HCT116 (cell line): ENCODE measurements at regions of chr9 and their contacts with region 1.

Region 1: DNA sequence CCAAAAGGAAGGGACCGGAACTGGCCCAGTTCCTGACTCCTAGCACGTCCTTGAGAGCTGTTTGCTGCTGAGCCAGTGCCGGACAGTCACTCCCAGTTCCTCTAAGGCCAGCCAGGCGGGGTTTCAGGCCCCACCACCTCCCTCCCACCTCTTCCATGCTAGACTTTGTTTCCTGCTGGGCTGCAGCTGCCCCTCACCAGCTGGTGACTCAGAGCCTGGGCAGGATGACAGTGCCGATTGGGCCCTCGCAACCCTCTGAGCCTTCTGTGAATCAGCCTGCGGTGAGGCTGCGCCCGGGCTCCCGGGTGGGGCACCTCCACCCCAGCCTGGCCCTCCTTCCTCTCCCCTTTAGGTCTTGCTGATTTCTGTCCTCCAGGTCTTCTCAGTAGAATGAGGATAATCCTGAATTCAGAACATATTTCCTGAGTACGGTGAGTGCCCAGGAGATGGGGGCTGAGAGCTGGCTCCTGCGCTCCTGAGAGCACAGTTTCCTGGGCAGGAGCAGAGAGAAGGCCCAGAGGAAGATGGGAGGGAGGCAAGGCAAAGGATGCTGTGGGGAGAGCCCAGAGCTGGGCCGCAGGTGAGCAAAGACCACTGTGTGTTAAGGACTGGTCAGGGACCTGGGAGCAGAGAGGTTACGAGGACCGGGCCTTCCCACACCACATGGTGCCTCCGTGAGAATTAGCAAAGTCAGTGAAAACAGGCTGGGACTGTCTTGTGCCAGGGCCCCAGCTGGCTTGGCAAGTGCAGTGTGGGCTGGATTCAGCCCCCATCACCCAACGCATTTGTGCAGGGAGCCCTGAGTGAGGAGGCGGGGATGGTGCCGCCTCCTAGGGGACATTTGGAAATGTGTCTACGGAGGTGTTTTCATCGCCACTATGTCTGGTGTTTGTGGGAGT is 32.9 kb upstream of the STXBP1 start:
- DNase-seq: peak; percentile 91
- ATAC-seq: peak; percentile 89
- H3K4me3 ChIP-seq: peak overlapping the region; percentile 34 to 54
- H3K27ac ChIP-seq: peak overlapping the region; percentile 82
- H3K4me1 ChIP-seq: peaks cover 45 to 69% of the 10 kb centered on the region in 2 experiments
- H3K27me3 ChIP-seq: no peaks in the 10 kb centered on the region
- CTCF ChIP-seq: peak in 2 of 3 experiments; percentile 36 to 50; a peak in 4 of 6 replicates
- POLR2A ChIP-seq: peak; percentile 58
- RAD21 ChIP-seq: no peak

Region 2: GRCh38 chr9:127503947-127504782 is 75.0 kb before region 1 on chr9:
- CTCF ChIA-PET with region 1: interaction called, 11 read pairs
- POLR2A ChIA-PET with region 1: interaction called, 3 read pairs
- RAD21 ChIA-PET with region 1: interaction called, 3 read pairs
- intact Hi-C with region 1: no loop called
- DNase-seq: peak; percentile 62
- ATAC-seq: peak; percentile 83
- H3K4me3 ChIP-seq: no peak overlapping the region
- H3K27ac ChIP-seq: peak overlapping the region; percentile 45
- H3K4me1 ChIP-seq: 0 out of 4 replicates have a peak, but pooled peaks cover 0 to 4% of the 10 kb centered on the region in 2 experiments
- H3K27me3 ChIP-seq: no peaks in the 10 kb centered on the region
- CTCF ChIP-seq: peak; percentile 89 to 93 (median 90)
- POLR2A ChIP-seq: no peak
- RAD21 ChIP-seq: peak; percentile 98

Region 3: DNA sequence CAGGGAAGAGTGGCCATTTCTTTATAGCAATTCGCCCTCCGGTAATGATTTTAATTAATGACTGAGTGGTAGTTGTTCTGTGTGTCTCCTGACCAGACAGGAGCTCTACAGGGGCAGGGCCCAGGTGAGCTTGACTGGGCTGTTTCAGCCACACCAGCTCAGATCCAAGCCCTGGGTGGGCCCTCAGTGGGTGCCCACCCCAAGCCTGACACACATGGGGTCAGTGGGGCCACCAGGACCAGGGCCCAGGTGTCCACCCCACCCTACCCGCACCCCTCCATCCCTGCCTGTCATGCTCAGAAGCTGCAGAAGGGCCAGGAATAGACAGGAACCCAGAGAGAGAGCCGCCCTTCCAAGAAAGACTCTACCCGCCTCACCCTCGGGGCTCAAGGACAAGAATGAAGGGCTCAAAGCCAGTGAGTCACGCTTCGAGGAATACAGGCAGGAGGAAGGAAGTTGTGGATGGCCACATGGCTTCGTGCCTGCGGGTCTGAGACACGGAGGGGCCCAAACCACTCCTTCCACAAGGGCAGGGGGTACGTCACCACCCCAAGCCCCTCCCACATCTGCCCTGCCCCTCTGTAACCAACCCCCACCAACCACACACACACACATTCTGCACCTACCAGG is 23.3 kb before region 1 on chr9:
- CTCF ChIA-PET with region 1: interaction called, 6 read pairs
- POLR2A ChIA-PET with region 1: interaction called, 14 read pairs
- RAD21 ChIA-PET with region 1: interaction called in 1 of 2 experiments, 3 read pairs
- intact Hi-C with region 1: no loop called
- DNase-seq: peak; percentile 80
- ATAC-seq: peak; percentile 88
- H3K4me3 ChIP-seq: no peak overlapping the region
- H3K27ac ChIP-seq: peak overlapping the region; percentile 79
- H3K4me1 ChIP-seq: peaks cover 60 to 71% of the 10 kb centered on the region in 2 experiments
- H3K27me3 ChIP-seq: no peaks in the 10 kb centered on the region
- CTCF ChIP-seq: no peak
- POLR2A ChIP-seq: no peak
- RAD21 ChIP-seq: no peak

Region 4: DNA sequence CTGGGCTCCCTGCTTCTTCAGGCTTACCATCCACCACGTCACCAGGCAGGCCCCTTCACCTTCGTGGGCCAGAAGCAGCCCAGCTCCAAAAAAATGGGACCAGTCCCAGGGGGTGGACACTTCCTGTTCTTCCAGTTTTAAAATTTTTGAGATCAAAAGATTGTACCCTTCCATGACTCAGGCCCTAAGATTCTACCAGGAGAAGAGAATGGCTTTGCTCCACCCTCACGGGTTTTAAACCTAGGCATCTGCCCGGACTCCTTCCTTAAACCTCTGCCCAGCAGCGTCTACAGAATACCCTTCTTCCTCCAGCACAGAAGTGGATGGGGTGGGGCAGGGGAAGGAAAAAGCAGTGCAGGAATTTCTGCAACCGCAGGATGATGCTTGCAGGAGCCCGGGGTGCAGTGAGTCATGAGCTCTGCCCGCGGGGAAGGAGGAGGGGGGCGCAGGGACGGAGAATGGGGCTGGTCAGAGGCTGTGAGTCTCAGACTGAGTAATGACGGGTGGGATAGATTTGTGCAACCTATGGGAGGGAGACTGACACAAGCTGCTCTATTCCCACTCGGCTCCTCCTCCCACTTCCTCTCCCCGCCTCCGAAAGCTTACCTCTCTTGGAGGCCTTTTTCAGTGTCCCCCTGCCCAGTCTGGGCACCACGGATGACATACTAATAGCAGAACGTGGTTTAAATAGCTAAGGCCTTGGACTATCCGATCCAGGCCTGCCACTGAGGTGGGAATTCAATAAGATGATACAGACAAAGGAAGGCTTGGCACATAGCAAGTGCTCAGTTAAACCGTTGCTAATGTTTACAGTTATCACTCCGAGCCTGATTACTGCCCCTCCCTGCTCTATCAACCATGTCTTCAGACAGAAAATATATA is 17.3 kb before region 1 on chr9:
- CTCF ChIA-PET with region 1: interaction called, 6 read pairs
- POLR2A ChIA-PET with region 1: interaction called, 14 read pairs
- RAD21 ChIA-PET with region 1: interaction called in 1 of 2 experiments, 6 read pairs
- intact Hi-C with region 1: no loop called
- DNase-seq: peak; percentile 97
- ATAC-seq: peak; percentile 82
- H3K4me3 ChIP-seq: peak overlapping the region; percentile 27 to 41
- H3K27ac ChIP-seq: peak overlapping the region; percentile 97
- H3K4me1 ChIP-seq: peaks cover 95 to 100% of the 10 kb centered on the region in 2 experiments
- H3K27me3 ChIP-seq: no peaks in the 10 kb centered on the region
- CTCF ChIP-seq: no peak
- POLR2A ChIP-seq: no peak
- RAD21 ChIP-seq: no peak

Region 5: GRCh38 chr9:127567055-127567729 is 12.0 kb before region 1 on chr9:
- CTCF ChIA-PET with region 1: interaction called, 5 read pairs
- POLR2A ChIA-PET with region 1: interaction called, 13 read pairs
- RAD21 ChIA-PET with region 1: interaction called in 1 of 2 experiments, 6 read pairs
- intact Hi-C with region 1: no loop called
- DNase-seq: no peak
- ATAC-seq: peak; percentile 60
- H3K4me3 ChIP-seq: peak overlapping the region; percentile 87 to 96
- H3K27ac ChIP-seq: peak overlapping the region; percentile 97
- H3K4me1 ChIP-seq: peaks cover 67 to 82% of the 10 kb centered on the region in 2 experiments
- H3K27me3 ChIP-seq: no peaks in the 10 kb centered on the region
- CTCF ChIP-seq: no peak
- POLR2A ChIP-seq: no peak
- RAD21 ChIP-seq: no peak

Region 6: GRCh38 chr9:127980706-127981558 is 401.7 kb after region 1 on chr9 and contains the start of gene EEIG1:
- CTCF ChIA-PET with region 1: no interaction called
- POLR2A ChIA-PET with region 1: no interaction called
- RAD21 ChIA-PET with region 1: no interaction called
- intact Hi-C with region 1: no loop called
- DNase-seq: peak; percentile 61
- ATAC-seq: peak; percentile 94
- H3K4me3 ChIP-seq: peak within 1 kb of the TSS; percentile 64 to 87
- H3K27ac ChIP-seq: peak within 1 kb of the TSS; percentile 95
- H3K4me1 ChIP-seq: peaks cover 28 to 44% of the 10 kb centered on the region in 2 experiments
- H3K27me3 ChIP-seq: no peaks in the 10 kb centered on the region
- CTCF ChIP-seq: no peak
- POLR2A ChIP-seq: peak; percentile 80
- RAD21 ChIP-seq: no peak
- total RNA-seq, gene EEIG1: 44.2 TPM

Region 7: DNA sequence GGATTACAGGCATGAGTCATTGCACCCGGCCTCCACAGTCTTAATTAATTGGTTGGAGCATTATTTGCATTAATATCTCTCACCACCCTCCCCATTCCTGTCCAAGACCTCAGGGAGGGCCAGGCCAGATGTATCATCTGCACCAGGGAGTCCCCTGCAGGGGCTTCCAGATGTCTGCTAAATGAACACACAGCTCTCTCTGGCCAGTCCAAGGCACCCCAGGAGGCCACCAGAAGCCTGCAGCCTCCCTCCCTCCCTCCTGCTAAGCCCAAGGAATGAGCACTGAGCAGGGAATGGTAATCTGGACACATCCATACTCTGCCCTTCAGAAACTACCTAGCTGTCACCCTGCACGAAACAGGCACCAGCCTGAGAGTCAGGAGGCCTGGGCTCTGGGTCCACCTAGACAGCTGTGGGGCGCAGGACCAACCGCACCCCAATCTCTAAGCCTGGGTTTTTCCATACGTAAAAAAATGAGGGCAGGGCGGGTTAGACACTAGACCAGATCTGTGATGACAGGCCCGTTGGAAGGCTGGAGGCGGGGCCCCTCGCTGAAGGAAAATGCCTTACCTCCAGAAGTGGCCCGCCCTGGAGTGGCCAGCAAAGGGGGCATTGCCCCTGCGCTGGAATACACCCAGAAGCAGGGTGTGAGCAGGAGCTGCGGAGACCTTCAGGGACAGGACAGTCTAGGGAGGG is 603.8 kb after region 1 on chr9:
- CTCF ChIA-PET with region 1: no interaction called
- POLR2A ChIA-PET with region 1: no interaction called
- RAD21 ChIA-PET with region 1: no interaction called
- intact Hi-C with region 1: no loop called
- DNase-seq: no peak
- ATAC-seq: peak; percentile 5; the same call in 1 of the 2 replicates
- H3K4me3 ChIP-seq: no peak overlapping the region
- H3K27ac ChIP-seq: no peak overlapping the region
- H3K4me1 ChIP-seq: no peaks in the 10 kb centered on the region
- H3K27me3 ChIP-seq: no peaks in the 10 kb centered on the region
- CTCF ChIP-seq: no peak
- POLR2A ChIP-seq: no peak
- RAD21 ChIP-seq: no peak